Activated naive CD4-positive, alpha-beta T cell treated with anti-CD3 and anti-CD28 coated beads, Interleukin-2, amount 10 ng/mL, durations not matched to agents 7 days and 5 days (primary cell): ENCODE measurements at regions of chr7 and their contacts with region 1.

Region 1: DNA sequence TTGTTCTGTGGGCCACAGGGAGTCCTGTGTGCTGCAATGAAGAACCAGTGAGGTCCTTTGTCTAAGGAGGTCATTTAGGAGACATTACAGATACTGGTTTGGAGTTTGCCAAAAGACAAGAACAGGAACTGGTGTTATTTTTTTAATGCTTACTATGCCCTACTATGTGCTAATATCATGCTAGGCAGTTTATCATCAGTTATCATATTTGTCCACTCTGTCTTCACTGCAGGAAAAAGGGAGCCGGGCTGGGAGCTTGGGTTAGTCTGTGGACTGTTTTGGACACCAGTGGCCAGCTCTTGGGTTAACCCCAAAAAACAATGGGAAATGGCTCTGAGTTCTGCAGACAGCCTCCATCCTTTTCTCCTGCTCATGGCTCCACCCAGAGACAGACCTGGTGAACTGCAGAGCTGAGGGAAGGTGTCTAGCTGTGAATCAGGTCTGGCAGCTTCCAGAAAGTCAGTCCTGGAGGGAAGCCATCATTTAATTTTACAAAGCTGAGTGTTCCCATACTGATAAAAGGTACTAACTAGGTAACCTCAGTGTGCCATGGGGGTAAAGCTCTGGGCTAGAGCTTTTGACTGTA is 101.2 kb upstream of the ZNF746 start:
- DNase-seq: peak; percentile 63
- H3K4me3 Mint-ChIP-seq: peak overlapping the region; percentile 56
- H3K27ac Mint-ChIP-seq: peak overlapping the region; percentile 89
- H3K4me1 Mint-ChIP-seq: peaks cover 42% of the 10 kb centered on the region
- H3K27me3 Mint-ChIP-seq: peaks cover 13% of the 10 kb centered on the region

Region 2: GRCh38 chr7:149261829-149262617 is 336.8 kb before region 1 on chr7 and contains the start of gene ZNF783:
- CTCF ChIA-PET with region 1: interaction called, 10 read pairs
- DNase-seq: peak; percentile 88
- H3K4me3 Mint-ChIP-seq: peak within 1 kb of the TSS; percentile 75
- H3K27ac Mint-ChIP-seq: peak within 1 kb of the TSS; percentile 82
- H3K4me1 Mint-ChIP-seq: peaks cover 30% of the 10 kb centered on the region
- H3K27me3 Mint-ChIP-seq: no peaks in the 10 kb centered on the region

Region 3: GRCh38 chr7:149422129-149422913 is 176.5 kb before region 1 on chr7:
- CTCF ChIA-PET with region 1: interaction called, 24 read pairs
- DNase-seq: peak; percentile 73
- H3K4me3 Mint-ChIP-seq: peak overlapping the region; percentile 67
- H3K27ac Mint-ChIP-seq: peak overlapping the region; percentile 78
- H3K4me1 Mint-ChIP-seq: peaks cover 14% of the 10 kb centered on the region
- H3K27me3 Mint-ChIP-seq: peaks cover 12% of the 10 kb centered on the region

Region 4: GRCh38 chr7:149586646-149587332 is 12.0 kb before region 1 on chr7:
- CTCF ChIA-PET with region 1: interaction called, 12 read pairs
- DNase-seq: no peak
- H3K4me3 Mint-ChIP-seq: no peak overlapping the region
- H3K27ac Mint-ChIP-seq: no peak overlapping the region
- H3K4me1 Mint-ChIP-seq: peaks cover 8% of the 10 kb centered on the region
- H3K27me3 Mint-ChIP-seq: no peaks in the 10 kb centered on the region

Region 5: DNA sequence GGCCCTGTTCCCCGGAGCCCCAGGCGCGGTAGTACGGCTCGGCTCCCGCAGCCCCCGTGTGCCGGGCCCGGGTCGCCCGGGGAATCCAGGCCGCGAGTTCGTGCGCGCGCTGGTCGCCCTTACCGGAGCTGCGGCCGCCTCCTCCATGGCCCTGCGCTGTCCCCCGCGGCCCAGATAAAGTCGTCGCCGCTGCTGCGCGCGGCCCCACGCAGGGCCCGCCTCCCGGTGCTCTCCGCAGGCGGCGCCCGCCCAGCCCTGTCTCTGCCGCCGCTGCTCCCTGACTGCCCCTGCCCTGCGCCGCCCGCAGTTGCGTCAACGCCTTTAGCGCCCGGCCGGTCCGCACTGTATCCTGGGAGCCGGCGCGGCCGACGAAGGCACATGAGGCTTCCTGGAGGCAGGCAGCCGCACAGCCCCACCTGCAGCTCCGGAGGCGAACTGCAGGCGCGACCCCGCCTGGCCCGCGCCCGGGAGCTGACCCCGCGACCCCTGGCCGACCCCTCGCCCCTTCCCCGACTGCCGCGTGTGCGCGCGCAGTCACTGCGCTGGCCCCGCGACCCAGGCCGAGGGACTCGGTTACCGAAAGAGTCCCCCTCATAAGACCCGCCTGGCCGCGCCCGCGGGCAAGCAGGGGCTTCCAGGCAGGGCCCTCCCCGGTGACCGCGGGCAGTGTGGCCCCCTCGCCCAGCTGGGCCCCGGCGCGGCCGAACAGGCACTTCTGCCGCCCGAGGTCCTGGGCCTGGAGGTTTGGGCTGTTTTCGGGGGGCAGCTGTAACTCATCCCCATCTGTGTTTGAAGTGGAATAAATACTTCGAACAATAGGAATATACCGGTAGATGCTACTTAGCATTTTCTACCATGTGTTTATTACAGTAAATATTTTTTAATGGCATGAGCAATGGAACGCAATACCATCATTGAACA is 25.9 kb after region 1 on chr7:
- CTCF ChIA-PET with region 1: interaction called, 16 read pairs
- DNase-seq: peak; percentile 94
- H3K4me3 Mint-ChIP-seq: peak overlapping the region; percentile 92
- H3K27ac Mint-ChIP-seq: peak overlapping the region; percentile 89
- H3K4me1 Mint-ChIP-seq: peaks cover 42% of the 10 kb centered on the region
- H3K27me3 Mint-ChIP-seq: peaks cover 34% of the 10 kb centered on the region